Tibial artery (tissue), 4 donors: ENCODE measurements at regions of chr2 and their contacts with region 1.

Region 1: GRCh38 chr2:189559579-189560272 is 20.9 kb downstream of the SLC40A1 start:
- DNase-seq: no peak
- H3K4me3 ChIP-seq: no peak overlapping the region
- H3K27ac ChIP-seq: peak overlapping the region; percentile 79 to 85
- H3K4me1 ChIP-seq: peaks cover 0 to 94% (median 49%) of the 10 kb centered on the region in 4 donors
- H3K27me3 ChIP-seq: no peaks in the 10 kb centered on the region
- CTCF ChIP-seq: no peak

Region 2: GRCh38 chr2:189096769-189097447 is 462.8 kb before region 1 on chr2:
- intact Hi-C with region 1: no loop called
- DNase-seq: no peak
- H3K4me3 ChIP-seq: no peak overlapping the region
- H3K27ac ChIP-seq: peak overlapping the region; percentile 21 to 27
- H3K4me1 ChIP-seq: peaks cover 0 to 60% (median 14%) of the 10 kb centered on the region in 4 donors
- H3K27me3 ChIP-seq: no peaks in the 10 kb centered on the region
- CTCF ChIP-seq: no peak

Region 3: GRCh38 chr2:189188115-189188805 is 371.5 kb before region 1 on chr2:
- intact Hi-C with region 1: loop called (anchors 10 kb)
- DNase-seq: no peak
- H3K4me3 ChIP-seq: no peak overlapping the region
- H3K27ac ChIP-seq: peak overlapping the region in 1 of 2 donors; percentile 44
- H3K4me1 ChIP-seq: peaks cover 0 to 14% (median 5%) of the 10 kb centered on the region in 4 donors
- H3K27me3 ChIP-seq: no peaks in the 10 kb centered on the region
- CTCF ChIP-seq: no peak

Region 4: DNA sequence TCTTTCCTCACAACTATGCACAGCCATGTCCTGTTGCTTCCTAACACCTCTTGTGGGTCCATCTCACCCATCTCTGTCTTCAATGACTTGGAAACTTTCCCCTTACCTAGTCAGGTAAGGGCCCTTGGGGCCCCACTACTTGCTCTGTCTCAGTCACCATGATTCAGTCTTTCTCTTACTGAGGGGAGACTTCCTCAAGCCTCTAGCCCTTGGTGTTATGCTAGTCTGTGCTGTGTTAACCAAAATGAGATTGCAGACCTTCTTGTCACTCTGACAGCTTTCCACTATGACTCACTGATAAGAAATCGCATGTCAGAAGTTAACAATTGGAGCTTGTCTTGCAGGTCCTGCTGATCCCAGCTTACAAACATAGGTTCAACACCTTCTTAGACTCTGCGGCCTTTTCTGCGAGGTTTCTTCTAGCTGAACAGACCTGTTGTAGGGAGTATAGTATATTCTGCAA is 53.2 kb before region 1 on chr2:
- intact Hi-C with region 1: no loop called
- DNase-seq: no peak
- H3K4me3 ChIP-seq: no peak overlapping the region
- H3K27ac ChIP-seq: no peak overlapping the region
- H3K4me1 ChIP-seq: no peaks in the 10 kb centered on the region
- H3K27me3 ChIP-seq: no peaks in the 10 kb centered on the region
- CTCF ChIP-seq: no peak

Region 5: GRCh38 chr2:189648846-189649509 is 89.3 kb after region 1 on chr2:
- intact Hi-C with region 1: no loop called
- DNase-seq: no peak
- H3K4me3 ChIP-seq: no peak overlapping the region
- H3K27ac ChIP-seq: no peak overlapping the region
- H3K4me1 ChIP-seq: no peaks in the 10 kb centered on the region
- H3K27me3 ChIP-seq: no peaks in the 10 kb centered on the region
- CTCF ChIP-seq: no peak

Region 6: DNA sequence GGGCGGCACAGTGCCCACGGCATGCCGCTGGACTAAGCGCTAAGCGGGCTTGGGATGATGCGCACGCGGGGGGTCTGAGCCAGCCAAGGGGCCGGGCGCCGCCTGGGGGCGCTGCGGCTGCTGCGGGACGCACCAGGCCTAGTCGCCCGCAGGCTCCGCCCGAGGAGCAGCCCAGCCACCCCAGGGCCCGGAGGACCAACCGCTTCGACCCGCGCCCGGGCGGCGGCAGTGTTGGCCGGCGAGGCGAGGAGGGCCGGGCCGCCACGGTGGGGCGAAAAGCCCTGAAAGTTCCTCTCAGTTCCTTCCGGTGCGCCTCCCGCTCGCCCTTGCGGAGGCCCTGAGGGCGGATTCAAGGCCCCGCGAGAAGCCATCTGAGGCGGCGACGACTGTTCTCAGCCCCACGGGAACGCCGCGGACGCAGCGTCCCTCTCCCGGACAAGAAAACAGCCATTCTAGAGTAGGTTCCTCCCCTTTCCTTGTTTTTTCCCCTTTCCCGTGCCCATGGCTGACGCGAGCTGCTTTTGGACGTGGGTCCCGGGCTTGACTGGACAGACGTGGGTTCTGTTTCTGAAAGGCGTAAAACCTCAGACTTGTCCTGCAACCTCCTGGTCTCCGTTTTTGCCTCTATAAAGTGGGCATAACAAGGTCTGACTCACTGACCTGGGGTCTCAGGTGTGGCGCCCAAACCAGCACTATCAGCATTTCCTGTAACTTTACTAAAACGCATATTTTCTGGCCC is 114.8 kb after region 1 on chr2 and contains the start of gene ANKAR:
- intact Hi-C with region 1: no loop called
- DNase-seq: peak; percentile 89 to 95
- H3K4me3 ChIP-seq: peak within 1 kb of the TSS; percentile 65
- H3K27ac ChIP-seq: peak within 1 kb of the TSS; percentile 96 to 97
- H3K4me1 ChIP-seq: peaks cover 0 to 22% (median 3%) of the 10 kb centered on the region in 4 donors
- H3K27me3 ChIP-seq: no peaks in the 10 kb centered on the region
- CTCF ChIP-seq: peak; percentile 82 to 85